ENCODE measurements at regions of chr14 and their contacts with region 1.

Region 1: DNA sequence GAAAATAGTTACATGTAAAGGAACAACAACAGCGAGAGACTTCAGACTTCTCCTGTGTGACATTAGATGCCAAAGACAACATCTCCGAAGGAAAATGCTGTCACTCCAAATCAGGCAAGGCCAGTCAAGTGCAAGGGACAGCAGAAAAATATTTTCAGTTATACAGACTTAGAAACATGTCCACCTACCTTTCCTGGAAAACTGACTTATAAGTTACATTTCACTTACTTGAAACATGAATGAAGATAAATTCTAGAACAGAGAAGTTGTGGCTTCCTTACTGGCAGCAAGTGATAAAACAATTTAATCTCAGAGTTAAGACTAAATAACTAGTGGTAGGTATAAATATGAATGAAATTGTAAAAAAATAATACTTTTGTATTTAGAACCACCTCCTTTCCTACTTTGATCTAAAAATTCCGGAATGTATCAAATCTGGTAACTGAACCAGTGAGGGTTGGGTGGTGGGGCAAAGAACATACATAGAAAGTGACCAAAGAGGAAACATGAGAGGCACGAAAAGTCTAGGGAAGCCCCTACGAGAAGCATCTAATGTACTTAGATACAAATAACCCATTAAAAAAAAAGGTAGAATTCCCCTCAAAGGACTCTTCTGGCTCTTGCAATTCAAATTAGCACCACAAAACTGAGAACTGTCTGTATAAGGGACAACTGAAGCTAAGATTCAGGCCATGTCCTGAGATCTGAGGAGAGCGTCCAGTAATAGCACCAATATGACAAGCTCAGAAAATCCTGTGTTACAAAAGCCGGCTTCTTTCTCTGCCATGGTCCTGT is 21.2 kb downstream of the MTHFD1 start:
- DNase-seq: no peak
- H3K4me3 ChIP-seq: no peak overlapping the region
- H3K27ac ChIP-seq: no peak overlapping the region
- H3K4me1 ChIP-seq: peaks cover 0 to 3% (median 0%) of the 10 kb centered on the region in 4 experiments; a peak in 2 of 7 replicates
- H3K27me3 ChIP-seq: no peaks in the 10 kb centered on the region
- CTCF ChIP-seq: no peak
- EP300 ChIP-seq: no peak
- POLR2A ChIP-seq: no peak
- RAD21 ChIP-seq: no peak

Region 2: DNA sequence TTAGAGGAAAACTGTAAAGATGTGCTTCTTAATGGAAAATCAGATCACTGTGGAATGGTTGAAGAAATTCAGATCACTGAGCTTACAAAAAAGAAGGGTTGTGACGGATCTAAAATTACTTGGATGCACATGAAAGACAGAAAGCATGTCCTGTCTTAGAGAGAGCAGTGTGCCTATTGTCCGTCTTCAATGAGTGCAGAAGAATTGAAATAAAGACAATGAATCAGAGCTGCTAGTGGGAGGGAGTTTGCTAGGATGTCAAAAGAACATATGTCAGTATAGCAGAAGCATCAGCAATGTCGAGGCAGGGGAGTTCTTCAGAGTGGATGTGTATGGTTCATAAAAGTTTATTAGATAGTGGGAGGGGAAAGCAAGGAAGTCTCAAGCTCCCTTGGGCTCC is 383.8 kb before region 1 on chr14:
- CTCF ChIA-PET with region 1: no interaction called
- POLR2A ChIA-PET with region 1: no interaction called
- DNase-seq: no peak
- H3K4me3 ChIP-seq: no peak overlapping the region
- H3K27ac ChIP-seq: no peak overlapping the region
- H3K4me1 ChIP-seq: no peaks in the 10 kb centered on the region
- H3K27me3 ChIP-seq: no peaks in the 10 kb centered on the region; a peak in 1 of 7 replicates
- CTCF ChIP-seq: no peak
- EP300 ChIP-seq: no peak
- POLR2A ChIP-seq: no peak
- RAD21 ChIP-seq: no peak

Region 3: GRCh38 chr14:64394977-64395633 is 14.2 kb before region 1 on chr14:
- CTCF ChIA-PET with region 1: interaction called, 12 read pairs
- POLR2A ChIA-PET with region 1: interaction called, 19 read pairs
- DNase-seq: no peak
- H3K4me3 ChIP-seq: no peak overlapping the region
- H3K27ac ChIP-seq: no peak overlapping the region
- H3K4me1 ChIP-seq: peaks cover 6 to 25% (median 17%) of the 10 kb centered on the region in 4 experiments
- H3K27me3 ChIP-seq: no peaks in the 10 kb centered on the region
- CTCF ChIP-seq: no peak
- EP300 ChIP-seq: no peak
- POLR2A ChIP-seq: no peak
- RAD21 ChIP-seq: no peak